CD4-positive, alpha-beta T cell (primary cell): ENCODE measurements at regions of chr1 and their contacts with region 1.

Region 1: DNA sequence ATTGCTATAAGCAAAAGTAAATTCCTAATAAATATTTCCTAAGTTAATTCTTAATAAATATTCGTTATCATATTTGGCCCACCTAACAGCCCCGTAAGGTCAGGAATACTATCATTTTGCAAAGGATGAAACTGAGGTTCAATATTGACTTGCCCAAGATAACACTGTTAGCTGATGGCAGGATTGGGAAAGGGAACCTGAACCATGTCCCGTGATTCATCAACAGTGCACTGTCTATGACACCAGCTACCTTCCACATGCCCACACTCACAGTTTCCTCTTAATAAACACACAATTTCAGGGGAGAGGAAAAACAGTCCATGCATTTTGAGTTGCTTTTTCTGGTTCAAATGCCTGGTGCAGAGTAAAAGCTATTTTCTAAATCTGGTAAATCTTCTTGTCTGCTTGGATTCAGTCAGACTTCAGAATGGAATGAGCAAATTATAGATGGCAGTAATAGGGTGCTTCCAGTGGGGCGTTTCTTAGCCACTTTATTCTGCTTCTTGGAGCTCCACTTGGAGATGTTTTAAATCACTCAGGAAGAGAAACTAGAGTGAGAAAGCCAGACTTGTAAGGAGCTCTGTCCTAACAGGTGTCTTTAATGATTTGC is 354.6 kb downstream of the PDE4B start:
- DNase-seq: no peak
- ATAC-seq: no peak
- H3K4me3 ChIP-seq: no peak overlapping the region
- H3K4me3 Mint-ChIP-seq: no peak overlapping the region
- H3K27ac ChIP-seq: no peak overlapping the region
- H3K27ac Mint-ChIP-seq: no peak overlapping the region
- H3K4me1 ChIP-seq: no peaks in the 10 kb centered on the region
- H3K4me1 Mint-ChIP-seq: no peaks in the 10 kb centered on the region
- H3K27me3 ChIP-seq: no peaks in the 10 kb centered on the region
- H3K27me3 Mint-ChIP-seq: peaks cover 9% of the 10 kb centered on the region
- CTCF ChIP-seq: no peak

Region 2: GRCh38 chr1:66022904-66023620 is 124.3 kb before region 1 on chr1:
- CTCF ChIA-PET with region 1: no interaction called
- POLR2A ChIA-PET with region 1: no interaction called
- intact Hi-C with region 1: loop called in 1 of 2 experiments (anchors 5 kb)
- DNase-seq: no peak
- ATAC-seq: no peak
- H3K4me3 ChIP-seq: no peak overlapping the region
- H3K4me3 Mint-ChIP-seq: no peak overlapping the region
- H3K27ac ChIP-seq: no peak overlapping the region
- H3K27ac Mint-ChIP-seq: no peak overlapping the region
- H3K4me1 ChIP-seq: no peaks in the 10 kb centered on the region
- H3K4me1 Mint-ChIP-seq: no peaks in the 10 kb centered on the region
- H3K27me3 ChIP-seq: no peaks in the 10 kb centered on the region
- H3K27me3 Mint-ChIP-seq: peaks cover 10% of the 10 kb centered on the region
- CTCF ChIP-seq: no peak

Region 3: GRCh38 chr1:66182551-66183178 is 35.3 kb after region 1 on chr1:
- CTCF ChIA-PET with region 1: no interaction called
- POLR2A ChIA-PET with region 1: no interaction called
- intact Hi-C with region 1: no loop called
- DNase-seq: peak in 13 of 14 experiments; percentile 2 to 72 (median 25)
- ATAC-seq: peak; percentile 90
- H3K4me3 ChIP-seq: no peak overlapping the region
- H3K4me3 Mint-ChIP-seq: peak overlapping the region; percentile 55
- H3K27ac ChIP-seq: no peak overlapping the region
- H3K27ac Mint-ChIP-seq: peak overlapping the region; percentile 62
- H3K4me1 ChIP-seq: peaks cover 4% of the 10 kb centered on the region
- H3K4me1 Mint-ChIP-seq: peaks cover 29% of the 10 kb centered on the region
- H3K27me3 ChIP-seq: no peaks in the 10 kb centered on the region
- H3K27me3 Mint-ChIP-seq: no peaks in the 10 kb centered on the region
- CTCF ChIP-seq: no peak